CD4-positive, alpha-beta memory T cell (primary cell): ENCODE measurements at regions of chr12 and their contacts with region 1.

Region 1: DNA sequence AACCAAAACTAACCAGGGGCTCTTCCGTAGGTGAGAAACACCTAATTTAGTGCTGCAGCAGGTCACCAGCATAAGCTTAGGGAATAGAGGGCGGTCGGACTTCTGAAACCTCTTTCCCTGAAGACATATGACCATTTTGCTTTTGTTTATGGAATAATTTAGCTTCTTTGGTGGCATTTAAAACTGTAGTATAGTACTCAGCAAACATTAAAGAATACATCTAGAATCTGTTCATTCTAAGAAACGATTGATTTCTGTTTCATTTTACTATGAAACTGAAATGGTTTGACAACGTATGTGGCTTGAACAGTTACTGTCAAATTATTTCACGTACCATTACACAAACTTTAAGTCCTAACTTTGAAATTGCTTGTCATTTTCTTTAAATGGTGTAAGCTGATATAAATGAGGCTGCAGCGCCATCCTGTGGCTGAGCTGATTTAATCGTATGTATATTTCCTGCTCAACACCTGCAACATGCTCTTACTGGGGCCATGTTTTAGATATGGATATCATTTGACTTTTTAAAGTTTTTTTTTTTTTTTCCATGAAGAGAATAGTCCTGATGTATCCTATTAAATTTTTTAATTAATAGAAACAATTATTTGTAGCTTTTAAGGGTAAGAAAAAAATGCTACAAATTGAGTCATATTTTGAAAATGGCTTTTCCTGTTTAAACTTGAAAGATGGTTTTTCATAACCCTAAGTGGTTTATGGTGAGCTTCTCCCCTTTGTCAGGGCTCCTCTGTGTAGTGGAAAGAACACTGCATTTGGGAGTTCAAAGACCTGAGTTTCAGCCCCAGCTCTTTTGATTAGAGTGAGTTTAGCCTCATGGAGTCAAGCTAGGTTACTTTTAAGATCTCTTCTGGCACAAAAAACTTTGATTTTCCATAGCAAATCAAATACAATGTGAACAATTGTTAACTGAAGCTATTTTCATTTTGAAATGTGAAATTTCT is 27.4 kb downstream of the CFAP54 start:
- DNase-seq: peak; percentile 80 to 84 (median 81)
- H3K4me3 ChIP-seq: peak overlapping the region in 1 of 2 donors; percentile 38
- H3K4me3 Mint-ChIP-seq: peak overlapping the region in 7 of 8 donors; percentile 12 to 80 (median 43)
- H3K27ac ChIP-seq: no peak overlapping the region
- H3K27ac Mint-ChIP-seq: peak overlapping the region; percentile 22 to 87 (median 67)
- H3K4me1 ChIP-seq: peaks cover 7% of the 10 kb centered on the region
- H3K4me1 Mint-ChIP-seq: peaks cover 5 to 11% (median 6%) of the 10 kb centered on the region in 4 donors
- H3K27me3 ChIP-seq: no peaks in the 10 kb centered on the region
- H3K27me3 Mint-ChIP-seq: no peaks in the 10 kb centered on the region

Region 2: DNA sequence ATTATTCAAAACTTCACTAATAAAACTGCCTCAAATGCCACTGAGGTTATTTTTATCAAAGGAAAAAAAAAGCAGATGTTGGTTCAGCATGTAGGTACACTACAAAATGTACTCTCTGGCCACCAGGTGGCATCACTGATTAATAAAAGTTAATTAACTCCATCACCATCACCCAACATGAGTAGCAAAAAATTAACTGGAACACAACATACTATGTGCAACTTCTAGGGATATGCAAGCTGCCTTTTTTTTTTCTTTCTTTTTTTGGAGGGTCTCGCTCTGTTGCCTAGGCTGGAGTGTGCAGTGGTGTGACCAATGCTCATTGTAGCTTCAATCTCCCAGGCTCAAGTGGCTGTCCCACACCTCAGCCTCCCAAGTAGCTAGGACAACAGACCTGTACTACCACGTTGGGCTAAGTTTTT is 1399.6 kb before region 1 on chr12:
- CTCF ChIA-PET with region 1: no interaction called
- POLR2A ChIA-PET with region 1: no interaction called
- intact Hi-C with region 1: loop called (anchors 5 kb)
- DNase-seq: peak; percentile 63 to 72 (median 66)
- H3K4me3 ChIP-seq: no peak overlapping the region
- H3K4me3 Mint-ChIP-seq: no peak overlapping the region
- H3K27ac ChIP-seq: no peak overlapping the region
- H3K27ac Mint-ChIP-seq: no peak overlapping the region
- H3K4me1 ChIP-seq: no peaks in the 10 kb centered on the region
- H3K4me1 Mint-ChIP-seq: no peaks in the 10 kb centered on the region
- H3K27me3 ChIP-seq: no peaks in the 10 kb centered on the region
- H3K27me3 Mint-ChIP-seq: no peaks in the 10 kb centered on the region

Region 3: GRCh38 chr12:96061864-96062453 is 454.8 kb before region 1 on chr12:
- CTCF ChIA-PET with region 1: interaction called, 127 read pairs
- POLR2A ChIA-PET with region 1: interaction called, 3 read pairs
- intact Hi-C with region 1: loop called (anchors 1 kb)
- DNase-seq: peak; percentile 75 to 80 (median 78)
- H3K4me3 ChIP-seq: no peak overlapping the region
- H3K4me3 Mint-ChIP-seq: peak overlapping the region in 1 of 8 donors; percentile 9
- H3K27ac ChIP-seq: no peak overlapping the region
- H3K27ac Mint-ChIP-seq: peak overlapping the region in 5 of 7 donors; percentile 1 to 73 (median 36)
- H3K4me1 ChIP-seq: peaks cover 26% of the 10 kb centered on the region
- H3K4me1 Mint-ChIP-seq: peaks cover 19 to 36% (median 27%) of the 10 kb centered on the region in 4 donors
- H3K27me3 ChIP-seq: no peaks in the 10 kb centered on the region
- H3K27me3 Mint-ChIP-seq: no peaks in the 10 kb centered on the region

Region 4: GRCh38 chr12:96208801-96209549 is 307.8 kb before region 1 on chr12:
- CTCF ChIA-PET with region 1: interaction called, 134 read pairs
- POLR2A ChIA-PET with region 1: interaction called, 9 read pairs
- intact Hi-C with region 1: no loop called
- DNase-seq: no peak
- H3K4me3 ChIP-seq: no peak overlapping the region
- H3K4me3 Mint-ChIP-seq: peak overlapping the region; percentile 57 to 96 (median 86)
- H3K27ac ChIP-seq: peak overlapping the region; percentile 62
- H3K27ac Mint-ChIP-seq: peak overlapping the region; percentile 92 to 100 (median 98)
- H3K4me1 ChIP-seq: peaks cover 100% of the 10 kb centered on the region
- H3K4me1 Mint-ChIP-seq: peaks cover 82 to 100% (median 92%) of the 10 kb centered on the region in 4 donors
- H3K27me3 ChIP-seq: no peaks in the 10 kb centered on the region
- H3K27me3 Mint-ChIP-seq: no peaks in the 10 kb centered on the region

Region 5: GRCh38 chr12:96303653-96304052 is 213.1 kb before region 1 on chr12:
- CTCF ChIA-PET with region 1: interaction called, 8 read pairs
- POLR2A ChIA-PET with region 1: no interaction called
- intact Hi-C with region 1: loop called (anchors 10 kb)
- DNase-seq: no peak
- H3K4me3 ChIP-seq: no peak overlapping the region
- H3K4me3 Mint-ChIP-seq: no peak overlapping the region
- H3K27ac ChIP-seq: no peak overlapping the region
- H3K27ac Mint-ChIP-seq: no peak overlapping the region
- H3K4me1 ChIP-seq: peaks cover 13% of the 10 kb centered on the region
- H3K4me1 Mint-ChIP-seq: peaks cover 14 to 37% (median 18%) of the 10 kb centered on the region in 4 donors
- H3K27me3 ChIP-seq: no peaks in the 10 kb centered on the region
- H3K27me3 Mint-ChIP-seq: no peaks in the 10 kb centered on the region

Region 6: GRCh38 chr12:96445691-96446583 is 70.8 kb before region 1 on chr12:
- CTCF ChIA-PET with region 1: interaction called, 12 read pairs
- POLR2A ChIA-PET with region 1: interaction called, 4 read pairs
- intact Hi-C with region 1: no loop called
- DNase-seq: peak; percentile 82 to 91 (median 86)
- H3K4me3 ChIP-seq: no peak overlapping the region
- H3K4me3 Mint-ChIP-seq: peak overlapping the region in 7 of 8 donors; percentile 31 to 72 (median 67)
- H3K27ac ChIP-seq: peak overlapping the region; percentile 92
- H3K27ac Mint-ChIP-seq: peak overlapping the region; percentile 93 to 99 (median 98)
- H3K4me1 ChIP-seq: peaks cover 36% of the 10 kb centered on the region
- H3K4me1 Mint-ChIP-seq: peaks cover 27 to 52% (median 36%) of the 10 kb centered on the region in 4 donors
- H3K27me3 ChIP-seq: no peaks in the 10 kb centered on the region
- H3K27me3 Mint-ChIP-seq: no peaks in the 10 kb centered on the region

Region 7: GRCh38 chr12:96495841-96496545 is 20.8 kb before region 1 on chr12:
- CTCF ChIA-PET with region 1: interaction called, 180 read pairs
- POLR2A ChIA-PET with region 1: interaction called, 35 read pairs
- intact Hi-C with region 1: no loop called
- DNase-seq: peak in 1 of 5 donors; percentile 26
- H3K4me3 ChIP-seq: no peak overlapping the region
- H3K4me3 Mint-ChIP-seq: peak overlapping the region; percentile 20 to 80 (median 64)
- H3K27ac ChIP-seq: no peak overlapping the region
- H3K27ac Mint-ChIP-seq: peak overlapping the region in 4 of 7 donors; percentile 64 to 79 (median 72)
- H3K4me1 ChIP-seq: peaks cover 33% of the 10 kb centered on the region
- H3K4me1 Mint-ChIP-seq: peaks cover 25 to 44% (median 35%) of the 10 kb centered on the region in 4 donors
- H3K27me3 ChIP-seq: no peaks in the 10 kb centered on the region
- H3K27me3 Mint-ChIP-seq: no peaks in the 10 kb centered on the region

Region 8: GRCh38 chr12:96548384-96548783 is 31.6 kb after region 1 on chr12:
- CTCF ChIA-PET with region 1: no interaction called
- POLR2A ChIA-PET with region 1: no interaction called
- intact Hi-C with region 1: no loop called
- DNase-seq: no peak
- H3K4me3 ChIP-seq: no peak overlapping the region
- H3K4me3 Mint-ChIP-seq: no peak overlapping the region
- H3K27ac ChIP-seq: no peak overlapping the region
- H3K27ac Mint-ChIP-seq: no peak overlapping the region
- H3K4me1 ChIP-seq: no peaks in the 10 kb centered on the region
- H3K4me1 Mint-ChIP-seq: no peaks in the 10 kb centered on the region
- H3K27me3 ChIP-seq: no peaks in the 10 kb centered on the region
- H3K27me3 Mint-ChIP-seq: peaks cover 4 to 10% of the 10 kb centered on the region in 2 donors